ENCODE measurements at regions of chr2 and their contacts with region 1.

Region 1: DNA sequence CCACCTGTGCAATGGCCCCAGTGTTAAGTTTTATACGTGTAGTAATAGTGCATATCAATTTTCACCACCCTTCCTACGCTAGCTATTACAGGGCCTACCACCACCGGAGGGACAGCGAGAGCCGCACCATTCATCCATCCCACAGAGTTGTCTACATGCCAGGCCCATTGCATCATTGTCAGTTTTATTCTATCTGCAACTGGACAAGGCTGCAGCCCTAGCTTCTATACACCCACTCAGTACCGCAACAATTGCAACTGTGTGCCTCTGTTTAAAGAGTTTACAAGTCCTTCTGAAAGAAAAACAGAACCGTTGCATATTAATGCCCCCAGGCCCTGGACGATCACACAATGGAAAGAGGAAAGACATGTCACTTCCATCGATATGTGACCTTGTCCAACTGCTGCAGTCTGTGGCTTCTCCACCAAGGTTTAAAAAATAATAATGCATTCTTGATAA is 58.6 kb downstream of the ZEB2 start:
- DNase-seq: no peak
- ATAC-seq: peak; percentile 36
- H3K4me3 ChIP-seq: no peak overlapping the region
- H3K27ac ChIP-seq: no peak overlapping the region
- H3K4me1 ChIP-seq: peaks cover 2 to 13% of the 10 kb centered on the region in 2 donors
- H3K27me3 ChIP-seq: no peaks in the 10 kb centered on the region

Region 2: DNA sequence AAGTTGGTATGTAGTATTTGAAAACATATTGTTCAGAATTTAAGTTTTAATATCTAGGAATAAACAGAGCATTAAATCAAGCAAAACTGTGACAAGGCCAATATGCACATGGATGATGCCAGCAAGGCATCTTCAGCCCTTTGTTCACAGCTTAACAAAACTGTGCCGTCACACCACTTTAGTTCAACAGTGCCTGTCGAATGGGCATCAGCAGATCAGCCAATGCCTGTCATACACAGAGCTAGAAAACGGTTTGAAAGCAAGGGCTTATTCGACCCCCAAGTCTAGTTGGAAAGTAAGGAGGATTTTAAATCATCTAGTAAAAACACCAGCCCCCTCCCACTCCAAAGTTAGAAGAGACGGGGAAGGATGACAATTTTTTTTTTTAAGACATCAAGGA is 41.9 kb after region 1 on chr2:
- intact Hi-C with region 1: loop called in 1 of 2 experiments (anchors 2 kb)
- DNase-seq: no peak
- ATAC-seq: no peak
- H3K4me3 ChIP-seq: no peak overlapping the region
- H3K27ac ChIP-seq: no peak overlapping the region
- H3K4me1 ChIP-seq: peaks cover 7 to 11% of the 10 kb centered on the region in 2 donors
- H3K27me3 ChIP-seq: no peaks in the 10 kb centered on the region

Measured in aorta (tissue), 5 donors.